Sigmoid colon (tissue), 7 donors: ENCODE measurements at regions of chr1 and their contacts with region 1.

Region 1: GRCh38 chr1:229203030-229203751 is 67.7 kb upstream of the RAB4A start:
- DNase-seq: no peak
- H3K4me3 ChIP-seq: no peak overlapping the region
- H3K27ac ChIP-seq: no peak overlapping the region
- H3K4me1 ChIP-seq: peaks cover 0 to 67% (median 42%) of the 10 kb centered on the region in 4 donors
- H3K27me3 ChIP-seq: no peaks in the 10 kb centered on the region
- CTCF ChIP-seq: no peak
- EP300 ChIP-seq: no peak
- POLR2A ChIP-seq: no peak

Region 2: GRCh38 chr1:229003233-229004031 is 199.8 kb before region 1 on chr1:
- intact Hi-C with region 1: loop called (anchors 10 kb)
- DNase-seq: peak; percentile 92
- H3K4me3 ChIP-seq: no peak overlapping the region
- H3K27ac ChIP-seq: peak overlapping the region in 3 of 4 donors; percentile 57 to 70 (median 61)
- H3K4me1 ChIP-seq: peaks cover 0 to 16% (median 10%) of the 10 kb centered on the region in 4 donors
- H3K27me3 ChIP-seq: no peaks in the 10 kb centered on the region
- CTCF ChIP-seq: no peak
- EP300 ChIP-seq: no peak
- POLR2A ChIP-seq: no peak

Region 3: GRCh38 chr1:229124520-229125124 is 78.6 kb before region 1 on chr1:
- intact Hi-C with region 1: loop called (anchors 5 kb)
- DNase-seq: peak; percentile 48
- H3K4me3 ChIP-seq: no peak overlapping the region
- H3K27ac ChIP-seq: no peak overlapping the region
- H3K4me1 ChIP-seq: peaks cover 0 to 25% (median 5%) of the 10 kb centered on the region in 4 donors
- H3K27me3 ChIP-seq: no peaks in the 10 kb centered on the region
- CTCF ChIP-seq: no peak
- EP300 ChIP-seq: no peak
- POLR2A ChIP-seq: no peak

Region 4: GRCh38 chr1:229625915-229626831 is 423.0 kb after region 1 on chr1 and contains the starts of genes TAF5L and URB2:
- intact Hi-C with region 1: no loop called
- DNase-seq: peak; percentile 94
- H3K4me3 ChIP-seq: peak within 1 kb of the TSS; percentile 70 to 96 (median 84)
- H3K27ac ChIP-seq: peak within 1 kb of the TSS; percentile 88 to 95 (median 92)
- H3K4me1 ChIP-seq: peaks cover 0 to 52% (median 37%) of the 10 kb centered on the region in 4 donors
- H3K27me3 ChIP-seq: no peaks in the 10 kb centered on the region
- CTCF ChIP-seq: no peak
- EP300 ChIP-seq: no peak
- POLR2A ChIP-seq: no peak
- total RNA-seq, gene TAF5L: 11.1 to 18.0 (median 15.0) TPM
- total RNA-seq, gene URB2: 4.3 to 11.7 (median 7.4) TPM